Left colon (tissue), 2 donors: ENCODE measurements at regions of chr9 and their contacts with region 1.

Region 1: GRCh38 chr9:107465467-107466451 is 23.8 kb downstream of the KLF4 start:
- DNase-seq: peak; percentile 53 to 76
- ATAC-seq: peak; percentile 99

Region 2: GRCh38 chr9:108282872-108283271 is 817.1 kb after region 1 on chr9:
- intact Hi-C with region 1: loop called in 1 of 2 experiments (anchors 10 kb)
- DNase-seq: no peak
- ATAC-seq: no peak

Region 3: DNA sequence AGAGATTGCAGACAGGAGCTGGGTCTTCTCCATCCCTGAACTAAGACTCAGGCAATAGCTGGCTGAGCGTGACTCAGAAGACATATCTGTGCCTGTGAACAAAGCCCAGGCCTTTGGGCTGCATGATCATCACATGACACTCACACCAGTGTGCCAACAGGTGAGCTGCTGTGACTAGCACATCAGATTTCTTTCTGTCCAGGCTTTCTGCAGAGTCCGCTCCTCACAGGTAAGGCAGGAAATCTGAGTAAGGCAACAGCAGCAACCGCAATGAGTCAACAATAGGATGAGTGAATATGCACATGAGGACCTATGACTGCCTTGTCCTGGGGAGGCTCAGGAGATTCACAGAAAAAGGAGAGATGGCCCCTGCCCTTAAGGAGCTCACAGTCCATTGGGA is 1096.4 kb after region 1 on chr9:
- intact Hi-C with region 1: loop called in 1 of 2 experiments (anchors 5 kb)
- DNase-seq: no peak
- ATAC-seq: no peak

Region 4: DNA sequence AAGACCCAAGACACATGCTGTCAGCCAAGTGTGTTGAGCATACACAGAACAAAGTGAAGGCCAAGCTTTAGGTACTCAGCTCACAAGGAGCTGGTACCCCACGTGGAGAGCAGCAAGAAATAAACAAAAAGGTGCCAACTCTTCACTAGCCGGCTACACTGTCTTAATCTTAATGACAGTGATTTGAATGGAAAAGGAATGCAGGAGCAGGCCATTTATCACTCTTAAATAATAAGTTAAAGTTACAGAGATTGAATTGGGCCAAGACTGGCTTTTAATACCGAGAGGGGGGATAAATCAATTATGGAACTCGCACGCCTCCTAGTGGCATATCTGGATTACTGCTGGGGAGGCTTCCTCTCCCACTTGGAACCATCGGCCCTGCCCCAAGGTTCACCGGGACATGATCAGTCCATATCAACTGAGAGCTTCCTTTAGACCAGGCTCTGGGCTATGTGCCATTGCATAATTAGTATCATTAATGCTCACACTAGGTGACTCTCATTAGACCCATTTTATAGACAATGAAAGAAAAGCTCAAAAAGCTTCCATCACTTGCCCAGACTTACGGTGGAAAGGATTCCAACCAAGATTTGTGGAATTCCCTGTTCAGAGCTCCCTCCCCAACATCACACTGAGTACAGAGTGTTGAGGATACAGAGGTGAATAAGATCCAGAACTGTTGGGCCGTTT is 1296.0 kb after region 1 on chr9:
- intact Hi-C with region 1: loop called in 1 of 2 experiments (anchors 10 kb)
- DNase-seq: peak in 1 of 2 donors; percentile 63
- ATAC-seq: peak; percentile 93